ENCODE measurements at regions of chr5 and their contacts with region 1.

Region 1: GRCh38 chr5:159262859-159263567 is at the start of gene UBLCP1:
- DNase-seq: peak; percentile 58 to 82 (median 74)
- H3K4me3 ChIP-seq: peak within 1 kb of the TSS; percentile 66 to 100 (median 97)
- H3K27ac ChIP-seq: peak within 1 kb of the TSS; percentile 66 to 98 (median 91)
- H3K27me3 ChIP-seq: no peaks in the 10 kb centered on the region
- CTCF ChIP-seq: peak in 15 of 56 donors; percentile 6 to 38 (median 27)
- total RNA-seq, gene UBLCP1: 11.9 to 47.4 (median 34.2) TPM

Region 2: GRCh38 chr5:159156426-159157238 is 106.4 kb before region 1 on chr5:
- intact Hi-C with region 1: loop called (anchors 5 to 10 kb)
- DNase-seq: peak in 1 of 10 donors; percentile 47
- H3K4me3 ChIP-seq: no peak overlapping the region
- H3K27ac ChIP-seq: no peak overlapping the region
- H3K27me3 ChIP-seq: no peaks in the 10 kb centered on the region
- CTCF ChIP-seq: peak; percentile 67 to 94 (median 87)

Region 3: DNA sequence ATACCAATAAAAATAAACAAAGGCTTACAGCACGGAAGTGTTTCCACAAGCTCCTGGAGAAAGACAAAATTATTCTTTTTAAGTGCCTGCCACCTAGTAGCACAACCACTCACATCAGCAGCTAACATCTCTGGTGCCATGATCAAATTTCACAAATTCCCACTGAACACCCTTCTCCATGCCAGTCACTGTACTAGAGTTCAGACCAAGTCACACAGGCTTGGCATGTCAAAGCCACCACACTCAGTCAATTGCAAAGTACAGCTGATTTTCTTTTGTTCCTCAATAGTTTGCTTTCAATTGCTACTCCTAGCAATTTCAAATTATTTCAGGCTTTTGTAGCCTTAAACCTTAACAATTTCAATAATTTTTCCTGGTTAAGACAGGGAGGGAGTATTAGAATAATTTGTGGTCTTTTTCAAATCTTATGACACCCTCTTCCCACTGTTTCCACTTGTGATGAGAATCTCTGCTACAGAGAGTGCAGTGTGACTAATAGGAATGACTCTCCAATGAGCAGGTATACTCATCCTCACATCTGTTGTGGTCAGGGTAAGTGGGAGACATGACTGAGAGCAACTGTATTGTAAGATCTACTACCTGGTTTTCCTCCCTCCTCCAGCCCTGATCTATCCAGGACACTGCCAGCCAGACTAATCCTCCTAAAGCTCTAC is 99.8 kb before region 1 on chr5:
- intact Hi-C with region 1: loop called (anchors 5 to 10 kb)
- DNase-seq: no peak
- H3K4me3 ChIP-seq: no peak overlapping the region
- H3K27ac ChIP-seq: peak overlapping the region in 1 of 59 donors; percentile 12
- H3K27me3 ChIP-seq: no peaks in the 10 kb centered on the region
- CTCF ChIP-seq: no peak

Region 4: GRCh38 chr5:159209438-159210305 is 53.3 kb before region 1 on chr5 and contains the start of gene RNF145:
- intact Hi-C with region 1: loop called (anchors 2 kb)
- DNase-seq: peak; percentile 70 to 89 (median 86)
- H3K4me3 ChIP-seq: peak within 1 kb of the TSS; percentile 67 to 94 (median 85)
- H3K27ac ChIP-seq: peak within 1 kb of the TSS; percentile 48 to 97 (median 91)
- H3K27me3 ChIP-seq: no peaks in the 10 kb centered on the region
- CTCF ChIP-seq: peak in 10 of 56 donors; percentile 0 to 31 (median 8)
- total RNA-seq, gene RNF145: 47.7 to 107 (median 74.3) TPM

Region 5: DNA sequence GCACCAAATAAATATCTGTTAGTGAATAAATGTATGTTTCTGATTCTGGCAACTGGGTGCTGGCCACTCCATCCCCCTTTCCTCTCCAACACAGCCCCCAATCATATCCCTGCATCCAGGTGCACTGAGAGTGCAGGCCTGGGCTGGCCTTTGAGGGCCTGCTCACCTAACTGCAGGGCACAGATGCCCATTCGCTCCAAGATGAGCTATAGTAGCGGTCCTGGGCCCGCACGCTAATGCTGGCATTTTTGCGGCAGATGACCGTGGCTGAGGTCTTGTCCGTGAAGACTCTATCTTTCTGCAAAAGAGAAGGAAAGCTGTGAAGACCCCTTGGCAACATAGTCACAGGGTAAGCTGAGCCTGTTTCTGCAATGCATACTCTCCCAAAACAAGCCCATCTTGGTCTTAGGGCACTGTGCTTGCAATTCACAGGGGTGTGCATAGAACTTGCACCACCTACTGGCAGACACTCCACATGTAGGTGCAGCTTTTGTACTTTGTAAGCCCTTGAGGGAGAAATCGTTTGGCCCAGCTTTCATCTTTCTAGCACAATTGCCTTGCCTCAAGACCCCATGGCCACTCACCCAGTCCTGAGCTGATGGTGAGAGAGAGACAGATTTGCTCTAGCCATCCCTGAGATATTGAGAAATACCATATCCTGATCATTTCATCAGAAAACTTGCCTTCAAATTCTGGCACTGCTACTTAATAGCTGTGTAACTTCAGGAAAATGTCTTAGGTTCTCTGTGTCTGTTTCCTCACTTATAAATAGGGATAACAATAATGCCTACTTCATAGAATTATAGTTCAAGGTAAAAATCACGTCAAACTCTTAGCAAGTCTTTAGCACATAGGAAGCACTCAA is 53.7 kb after region 1 on chr5:
- intact Hi-C with region 1: no loop called
- DNase-seq: no peak
- H3K4me3 ChIP-seq: no peak overlapping the region
- H3K27ac ChIP-seq: no peak overlapping the region
- H3K27me3 ChIP-seq: peaks cover 0 to 9% (median 0%) of the 10 kb centered on the region in 45 donors
- CTCF ChIP-seq: peak in 53 of 56 donors; percentile 15 to 65 (median 42)

Measured in dorsolateral prefrontal cortex (tissue), 120 donors.